Calu3 (cell line): ENCODE measurements at regions of chr7 and their contacts with region 1.

Region 1: GRCh38 chr7:65307651-65308299 is 65.9 kb upstream of the ZNF92 start:
- DNase-seq: peak; percentile 53
- H3K4me3 Mint-ChIP-seq: no peak overlapping the region
- H3K27ac Mint-ChIP-seq: no peak overlapping the region
- H3K4me1 Mint-ChIP-seq: no peaks in the 10 kb centered on the region
- H3K27me3 Mint-ChIP-seq: no peaks in the 10 kb centered on the region
- CTCF ChIP-seq: peak; percentile 49

Region 2: GRCh38 chr7:64951250-64951848 is 356.4 kb before region 1 on chr7:
- CTCF ChIA-PET with region 1: no interaction called
- intact Hi-C with region 1: loop called (anchors 1 kb)
- DNase-seq: peak; percentile 15
- H3K4me3 Mint-ChIP-seq: no peak overlapping the region
- H3K27ac Mint-ChIP-seq: no peak overlapping the region
- H3K4me1 Mint-ChIP-seq: no peaks in the 10 kb centered on the region
- H3K27me3 Mint-ChIP-seq: peaks cover 9% of the 10 kb centered on the region
- CTCF ChIP-seq: peak; percentile 25

Region 3: GRCh38 chr7:65216459-65216858 is 91.3 kb before region 1 on chr7:
- CTCF ChIA-PET with region 1: interaction called, 5 read pairs
- intact Hi-C with region 1: loop called (anchors 1 kb)
- DNase-seq: peak; percentile 72
- H3K4me3 Mint-ChIP-seq: no peak overlapping the region
- H3K27ac Mint-ChIP-seq: no peak overlapping the region
- H3K4me1 Mint-ChIP-seq: no peaks in the 10 kb centered on the region
- H3K27me3 Mint-ChIP-seq: no peaks in the 10 kb centered on the region
- CTCF ChIP-seq: peak; percentile 48